A549 (cell line): ENCODE measurements at regions of chr12 and their contacts with region 1.

Region 1: GRCh38 chr12:92784795-92785562 is 82.2 kb downstream of the PLEKHG7 start:
- DNase-seq: peak; percentile 67 to 82
- ATAC-seq: peak; percentile 100
- H3K4me3 ChIP-seq: no peak overlapping the region
- H3K27ac ChIP-seq: no peak overlapping the region
- H3K4me1 ChIP-seq: peaks cover 8% of the 10 kb centered on the region; the same call in 1 of the 3 replicates
- CTCF ChIP-seq: peak; percentile 81
- EP300 ChIP-seq: no peak
- POLR2A ChIP-seq: no peak
- RAD21 ChIP-seq: peak; percentile 88 to 93

Region 2: GRCh38 chr12:92745856-92746540 is 39.0 kb before region 1 on chr12:
- CTCF ChIA-PET with region 1: no interaction called
- POLR2A ChIA-PET with region 1: no interaction called
- DNase-seq: peak; percentile 72 to 79
- ATAC-seq: peak; percentile 96 to 98
- H3K4me3 ChIP-seq: no peak overlapping the region
- H3K27ac ChIP-seq: peak overlapping the region; percentile 19 to 79; a peak in 5 of 6 replicates
- H3K4me1 ChIP-seq: peaks cover 16% of the 10 kb centered on the region
- CTCF ChIP-seq: no peak
- EP300 ChIP-seq: no peak
- POLR2A ChIP-seq: no peak
- RAD21 ChIP-seq: no peak

Region 3: DNA sequence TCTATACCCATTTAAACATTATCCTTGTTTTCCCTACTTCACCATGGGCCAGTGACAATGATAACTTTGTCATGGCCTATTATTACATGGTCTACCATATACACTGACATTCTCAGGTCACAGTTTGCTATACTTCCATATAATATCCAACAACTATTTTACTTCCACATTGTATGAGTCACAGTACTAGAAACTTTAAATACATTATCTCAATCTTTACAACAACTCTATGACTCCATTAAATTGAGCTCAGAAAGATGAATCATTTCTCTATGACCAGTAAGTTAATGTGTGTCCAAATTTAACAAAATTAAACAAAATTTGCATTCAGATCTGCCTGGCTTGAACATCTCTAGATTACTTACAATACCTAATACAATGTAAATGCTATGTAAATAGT is 11.7 kb after region 1 on chr12:
- CTCF ChIA-PET with region 1: interaction called, 15 read pairs
- POLR2A ChIA-PET with region 1: no interaction called
- DNase-seq: no peak
- ATAC-seq: no peak
- H3K4me3 ChIP-seq: no peak overlapping the region
- H3K27ac ChIP-seq: no peak overlapping the region
- H3K4me1 ChIP-seq: no peaks in the 10 kb centered on the region
- CTCF ChIP-seq: no peak
- EP300 ChIP-seq: no peak
- POLR2A ChIP-seq: no peak
- RAD21 ChIP-seq: no peak